ENCODE measurements at regions of chr17 and their contacts with region 1.

Region 1: DNA sequence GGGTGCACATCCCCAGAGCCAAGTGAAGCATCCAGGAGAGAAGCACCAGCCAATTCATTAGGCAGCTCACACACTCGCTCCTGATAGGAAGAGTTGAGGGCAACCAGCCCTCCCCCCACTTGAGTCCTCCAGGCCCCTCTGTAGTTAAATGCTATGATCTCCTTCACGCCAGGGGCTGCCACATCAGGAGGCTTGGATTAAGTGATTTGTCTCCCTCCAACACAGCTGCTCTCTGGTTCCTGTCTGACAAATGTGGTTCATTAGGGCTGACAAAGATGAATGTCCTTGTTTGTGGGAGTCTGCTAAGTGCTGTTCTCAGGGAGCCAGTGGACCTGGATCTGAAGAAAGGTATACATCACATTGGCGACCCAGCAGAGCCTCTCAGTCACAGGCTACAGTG is 94.5 kb upstream of the WSCD1 start:
- DNase-seq: no peak
- H3K4me3 Mint-ChIP-seq: no peak overlapping the region
- H3K27ac Mint-ChIP-seq: no peak overlapping the region
- H3K4me1 Mint-ChIP-seq: no peaks in the 10 kb centered on the region
- H3K27me3 Mint-ChIP-seq: peaks cover 79% of the 10 kb centered on the region
- CTCF ChIP-seq: no peak

Region 2: DNA sequence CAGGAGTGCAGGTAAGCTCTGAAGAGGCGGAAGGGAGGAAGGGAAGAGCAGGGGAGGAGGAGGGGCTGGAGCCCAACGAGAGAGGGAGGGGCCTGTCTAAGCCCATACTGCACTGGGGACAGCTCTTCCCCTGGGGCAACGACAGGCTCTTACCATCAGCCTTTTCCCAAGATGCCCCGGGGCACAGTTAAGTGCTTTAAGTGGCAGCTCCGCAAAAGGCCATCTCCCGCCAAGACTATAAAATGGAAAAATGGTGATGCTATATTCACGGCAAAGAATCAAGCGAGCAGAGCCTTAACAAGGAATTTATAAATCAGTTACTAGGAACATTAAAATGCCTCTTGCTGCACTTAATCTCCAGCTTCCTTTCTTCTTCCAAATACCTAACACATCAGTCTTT is 281.1 kb before region 1 on chr17:
- CTCF ChIA-PET with region 1: no interaction called
- intact Hi-C with region 1: loop called (anchors 10 kb)
- DNase-seq: no peak
- H3K4me3 Mint-ChIP-seq: no peak overlapping the region
- H3K27ac Mint-ChIP-seq: no peak overlapping the region
- H3K4me1 Mint-ChIP-seq: no peaks in the 10 kb centered on the region
- H3K27me3 Mint-ChIP-seq: peaks cover 89% of the 10 kb centered on the region
- CTCF ChIP-seq: no peak

Region 3: DNA sequence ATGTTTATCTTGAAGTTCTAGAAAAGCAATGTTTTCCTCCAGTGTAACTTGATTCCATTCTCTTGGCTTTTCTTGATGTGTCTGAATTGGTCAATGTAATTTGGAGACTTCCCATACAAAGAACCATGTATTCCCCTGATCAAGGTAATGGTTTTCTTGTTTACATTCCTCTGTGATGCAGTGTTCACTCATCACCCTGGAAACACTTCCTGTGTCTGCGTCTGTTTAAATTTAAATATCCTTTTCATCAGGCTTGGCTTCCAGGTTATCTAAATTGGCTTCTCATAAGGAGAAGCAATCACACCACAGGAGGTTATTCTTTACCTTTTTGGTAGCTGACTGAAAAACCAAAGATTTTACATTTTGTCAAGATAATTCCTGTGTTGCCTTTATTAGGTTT is 142.8 kb before region 1 on chr17:
- CTCF ChIA-PET with region 1: no interaction called
- intact Hi-C with region 1: no loop called
- DNase-seq: no peak
- H3K4me3 Mint-ChIP-seq: no peak overlapping the region
- H3K27ac Mint-ChIP-seq: peak overlapping the region; percentile 89
- H3K4me1 Mint-ChIP-seq: peaks cover 77% of the 10 kb centered on the region
- H3K27me3 Mint-ChIP-seq: no peaks in the 10 kb centered on the region
- CTCF ChIP-seq: no peak

Measured in Calu3 (cell line).